Activated CD4-positive, alpha-beta T cell treated with anti-CD3 and anti-CD28 coated beads for 36 hours (primary cell): ENCODE measurements at regions of chr4 and their contacts with region 1.

Region 1: DNA sequence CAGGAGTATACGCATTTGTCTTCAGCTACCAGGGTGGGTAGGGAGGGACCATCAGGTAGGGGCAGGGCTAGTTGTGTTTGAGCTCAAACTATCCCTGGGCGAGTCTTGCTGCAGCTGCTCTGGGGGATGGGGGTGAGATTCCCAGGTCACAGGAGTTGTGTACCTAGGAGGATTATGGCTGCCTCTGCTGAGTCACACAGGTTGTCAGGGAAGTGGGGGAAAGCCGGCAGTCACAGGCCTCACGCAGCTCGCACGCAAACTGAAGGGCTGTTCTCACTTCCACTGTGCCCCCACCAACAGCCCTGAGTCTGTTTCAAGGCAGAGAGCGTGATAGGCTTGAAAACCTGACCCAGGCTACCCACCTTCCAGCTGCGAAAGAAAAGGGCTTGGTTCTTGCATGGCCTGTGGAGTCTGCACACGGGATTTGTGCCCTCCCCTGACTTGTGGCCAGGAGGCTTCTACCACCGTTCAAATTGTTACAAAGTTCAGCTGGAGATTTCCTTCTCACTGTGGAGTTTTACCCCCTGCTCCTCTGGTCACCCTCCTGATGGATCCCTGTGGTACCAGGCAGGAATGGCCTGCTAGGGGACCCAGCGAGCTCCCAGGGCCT is 63.8 kb downstream of the ARFIP1 start:
- DNase-seq: no peak
- ATAC-seq: no peak
- H3K4me3 Mint-ChIP-seq: no peak overlapping the region
- H3K27ac Mint-ChIP-seq: no peak overlapping the region
- H3K4me1 Mint-ChIP-seq: peaks cover 17% of the 10 kb centered on the region
- H3K27me3 Mint-ChIP-seq: no peaks in the 10 kb centered on the region

Region 2: DNA sequence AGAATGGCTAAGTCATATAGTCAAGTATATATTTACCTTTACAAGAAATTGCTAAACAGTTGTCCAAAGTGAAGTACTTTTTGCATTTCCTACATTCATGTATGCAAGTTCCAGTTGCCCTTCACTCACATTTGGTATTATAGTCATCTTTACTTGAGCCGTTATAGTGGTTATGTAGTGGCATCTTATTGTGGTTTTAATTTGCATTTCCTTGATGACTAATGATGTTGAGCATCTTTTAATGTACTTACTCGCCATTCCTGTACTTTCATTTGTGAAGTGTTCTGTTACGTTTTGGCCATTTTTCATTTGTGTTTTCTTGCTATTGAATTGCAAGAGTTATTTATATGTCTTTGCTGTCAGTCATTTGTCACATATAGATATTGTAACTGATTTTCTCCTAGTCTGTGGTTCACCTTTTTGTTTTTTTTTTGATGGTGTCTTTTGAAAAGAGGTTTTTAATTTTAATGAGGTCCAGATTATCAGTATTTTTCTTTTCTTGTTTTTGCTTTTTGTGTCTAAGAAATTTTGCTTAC is 36.2 kb before region 1 on chr4:
- CTCF ChIA-PET with region 1: interaction called, 3 read pairs
- POLR2A ChIA-PET with region 1: interaction called, 14 read pairs
- intact Hi-C with region 1: no loop called
- DNase-seq: no peak
- ATAC-seq: peak; percentile 86
- H3K4me3 Mint-ChIP-seq: peak overlapping the region; percentile 22
- H3K27ac Mint-ChIP-seq: peak overlapping the region; percentile 72
- H3K4me1 Mint-ChIP-seq: peaks cover 19% of the 10 kb centered on the region
- H3K27me3 Mint-ChIP-seq: no peaks in the 10 kb centered on the region

Region 3: DNA sequence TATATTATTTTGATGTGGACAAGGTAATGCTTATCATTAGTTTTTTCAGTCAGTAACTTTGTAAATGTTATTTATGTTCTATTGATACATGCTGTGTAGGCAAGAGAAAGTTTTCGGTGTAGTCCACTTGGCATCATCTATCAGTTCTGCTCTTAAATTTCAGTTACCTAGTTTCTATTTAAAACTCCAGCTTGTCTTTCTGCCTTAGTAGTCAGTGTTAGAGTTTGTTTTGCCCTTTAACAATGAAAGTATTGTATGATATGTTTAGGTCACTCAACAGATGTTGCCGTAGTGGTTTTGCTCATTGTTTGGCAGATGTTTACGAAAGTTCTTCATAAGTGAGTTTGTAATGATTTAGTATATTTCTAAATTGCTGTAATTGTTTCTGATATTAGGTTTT is 57.6 kb after region 1 on chr4:
- CTCF ChIA-PET with region 1: no interaction called
- POLR2A ChIA-PET with region 1: no interaction called
- intact Hi-C with region 1: no loop called
- DNase-seq: no peak
- ATAC-seq: no peak
- H3K4me3 Mint-ChIP-seq: no peak overlapping the region
- H3K27ac Mint-ChIP-seq: no peak overlapping the region
- H3K4me1 Mint-ChIP-seq: no peaks in the 10 kb centered on the region
- H3K27me3 Mint-ChIP-seq: no peaks in the 10 kb centered on the region

Region 4: GRCh38 chr4:152927737-152928136 is 84.2 kb after region 1 on chr4:
- CTCF ChIA-PET with region 1: no interaction called
- POLR2A ChIA-PET with region 1: no interaction called
- intact Hi-C with region 1: no loop called
- DNase-seq: no peak
- ATAC-seq: no peak
- H3K4me3 Mint-ChIP-seq: no peak overlapping the region
- H3K27ac Mint-ChIP-seq: no peak overlapping the region
- H3K4me1 Mint-ChIP-seq: no peaks in the 10 kb centered on the region
- H3K27me3 Mint-ChIP-seq: peaks cover 12% of the 10 kb centered on the region